Dorsolateral prefrontal cortex (tissue), 120 donors: ENCODE measurements at regions of chr15 and their contacts with region 1.

Region 1: DNA sequence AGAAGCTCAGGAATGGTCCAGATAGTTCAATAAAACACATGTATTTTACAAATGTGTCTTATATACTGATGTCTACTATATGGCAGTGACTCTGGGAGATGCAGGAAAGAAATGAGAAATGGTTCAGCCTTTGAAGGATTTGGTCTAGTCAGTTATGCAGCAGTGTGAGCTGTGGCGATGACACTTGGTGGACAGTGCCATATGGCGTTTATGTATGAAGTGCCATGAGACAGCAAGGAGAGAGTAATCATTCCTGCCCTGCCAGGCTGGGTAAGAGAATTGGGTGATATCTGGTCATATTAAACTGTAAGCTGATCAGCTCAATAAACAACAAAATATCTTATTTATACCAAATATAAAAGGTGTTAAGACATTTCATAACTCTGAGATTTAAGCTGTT is 47.6 kb upstream of the ANP32A start:
- DNase-seq: no peak
- H3K4me3 ChIP-seq: no peak overlapping the region
- H3K27ac ChIP-seq: no peak overlapping the region
- H3K27me3 ChIP-seq: no peaks in the 10 kb centered on the region
- CTCF ChIP-seq: no peak

Region 2: GRCh38 chr15:68829068-68829467 is 39.2 kb before region 1 on chr15:
- intact Hi-C with region 1: loop called in 1 of 2 experiments (anchors 5 kb)
- DNase-seq: peak in 2 of 10 donors; percentile 64 to 70
- H3K4me3 ChIP-seq: no peak overlapping the region
- H3K27ac ChIP-seq: peak overlapping the region in 32 of 59 donors; percentile 1 to 72 (median 47)
- H3K27me3 ChIP-seq: no peaks in the 10 kb centered on the region
- CTCF ChIP-seq: peak in 55 of 56 donors; percentile 44 to 91 (median 70)

Region 3: DNA sequence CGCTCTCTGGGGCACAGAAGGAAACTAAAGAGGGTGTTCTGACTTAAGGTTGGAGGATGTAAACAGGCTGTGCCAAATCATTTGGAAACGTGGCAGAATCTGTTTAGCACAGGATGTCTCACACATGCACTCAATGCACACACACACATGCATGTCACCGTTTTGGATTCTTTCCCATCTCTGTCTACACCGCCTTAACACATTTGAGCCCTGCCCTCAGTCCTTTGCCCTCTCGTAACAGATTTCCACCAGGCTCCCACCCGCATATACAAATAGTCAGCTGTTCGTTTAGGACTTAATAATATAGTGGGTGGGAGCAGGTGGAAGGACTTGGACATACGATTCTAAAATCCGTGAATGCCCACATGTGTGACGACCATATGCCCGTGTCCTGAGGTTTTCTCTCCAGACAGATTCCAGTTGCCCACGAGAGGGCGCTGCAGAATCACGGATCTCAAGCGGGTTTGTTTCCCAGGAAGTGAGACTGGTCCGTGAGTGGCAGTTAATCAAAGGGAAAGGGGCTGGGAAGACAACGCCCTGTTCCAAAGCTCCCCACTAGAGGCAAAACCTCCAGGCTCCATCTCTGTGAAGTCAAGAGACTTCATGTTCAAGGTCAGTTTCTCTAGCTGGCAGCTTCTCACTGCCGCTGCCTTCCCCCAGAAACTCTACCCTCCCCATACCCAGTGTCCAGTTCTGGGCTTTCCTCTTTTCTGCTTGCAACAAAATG is 190.7 kb after region 1 on chr15:
- intact Hi-C with region 1: no loop called
- DNase-seq: peak; percentile 86 to 95 (median 91)
- H3K4me3 ChIP-seq: peak overlapping the region in 38 of 59 donors; percentile 1 to 54 (median 31)
- H3K27ac ChIP-seq: peak overlapping the region in 3 of 59 donors; percentile 18 to 36 (median 26)
- H3K27me3 ChIP-seq: peaks cover 0 to 10% (median 0%) of the 10 kb centered on the region in 45 donors
- CTCF ChIP-seq: peak; percentile 82 to 99 (median 95)